Left ventricle myocardium superior (tissue), 1 donor: ENCODE measurements at regions of chr5 and their contacts with region 1.

Region 1: DNA sequence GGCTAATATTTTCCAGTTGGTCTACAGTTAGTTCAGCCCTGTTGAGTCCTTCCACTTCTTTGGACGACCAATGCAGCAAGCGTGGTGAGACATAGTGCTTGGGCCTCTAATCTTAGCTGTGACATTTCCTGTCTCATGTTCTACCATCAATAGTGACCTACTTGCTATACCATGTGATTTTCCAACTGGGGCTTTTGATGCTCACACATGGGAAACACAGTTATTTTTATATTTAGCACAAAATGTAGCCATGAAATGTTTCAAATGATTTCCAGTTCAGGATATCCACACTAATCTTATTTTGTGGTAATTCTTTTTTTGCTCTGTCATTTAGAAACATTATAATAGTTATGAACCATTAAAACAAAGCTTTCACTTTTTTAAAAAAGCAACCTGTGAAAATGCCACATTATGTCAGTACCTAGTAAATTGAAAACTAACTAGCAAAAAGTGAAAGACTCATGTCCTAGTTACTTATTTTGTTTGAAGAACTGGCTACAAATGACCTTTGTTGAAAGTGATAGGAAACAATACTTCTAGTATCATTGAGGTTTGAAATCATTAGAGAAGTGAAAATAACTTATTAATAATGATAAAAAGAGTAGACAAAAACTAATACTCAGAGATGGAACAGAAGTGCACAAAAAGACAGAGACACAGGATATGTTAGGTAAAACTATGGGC is 18.3 kb downstream of the MARCHF3 start:
- DNase-seq: no peak
- ATAC-seq: peak; percentile 47

Region 2: DNA sequence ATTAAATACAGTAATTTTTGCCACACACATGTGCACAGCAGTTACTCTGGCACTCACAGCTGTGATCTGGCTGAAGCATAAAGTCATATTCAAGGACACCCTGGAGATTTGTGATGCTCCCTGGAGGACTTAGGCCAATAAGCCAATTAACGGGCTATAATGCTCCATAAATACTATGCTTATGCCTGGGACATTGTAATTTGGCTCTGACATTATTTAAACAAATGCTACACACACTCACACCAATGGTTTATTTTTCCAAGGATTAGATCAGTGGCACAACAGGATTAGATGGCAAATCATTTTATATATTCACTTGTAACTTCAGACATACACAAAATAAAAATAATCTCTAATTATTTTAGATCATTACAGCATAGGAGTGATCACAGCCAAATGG is 123.9 kb before region 1 on chr5:
- intact Hi-C with region 1: no loop called
- DNase-seq: no peak
- ATAC-seq: no peak

Region 3: DNA sequence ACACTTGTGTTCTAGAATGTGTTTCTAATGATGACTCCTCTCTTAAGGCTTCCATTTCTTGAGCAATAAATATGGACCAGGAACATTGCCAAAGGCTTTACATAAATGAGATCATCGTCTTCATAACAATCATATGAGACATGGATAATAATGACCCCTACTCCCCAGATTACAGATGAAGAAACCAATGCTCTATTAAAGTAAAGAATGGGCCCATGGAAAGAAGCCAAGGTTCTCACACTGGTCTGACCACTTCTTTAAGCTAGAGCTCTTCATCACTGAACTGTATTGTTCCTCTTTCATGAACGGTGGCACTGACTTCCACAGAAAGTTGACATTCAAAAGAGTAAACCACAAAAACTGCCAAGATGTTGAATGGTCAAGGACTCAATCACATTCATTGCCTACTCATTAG is 47.0 kb before region 1 on chr5:
- intact Hi-C with region 1: loop called (anchors 10 kb)
- DNase-seq: no peak
- ATAC-seq: no peak

Region 4: DNA sequence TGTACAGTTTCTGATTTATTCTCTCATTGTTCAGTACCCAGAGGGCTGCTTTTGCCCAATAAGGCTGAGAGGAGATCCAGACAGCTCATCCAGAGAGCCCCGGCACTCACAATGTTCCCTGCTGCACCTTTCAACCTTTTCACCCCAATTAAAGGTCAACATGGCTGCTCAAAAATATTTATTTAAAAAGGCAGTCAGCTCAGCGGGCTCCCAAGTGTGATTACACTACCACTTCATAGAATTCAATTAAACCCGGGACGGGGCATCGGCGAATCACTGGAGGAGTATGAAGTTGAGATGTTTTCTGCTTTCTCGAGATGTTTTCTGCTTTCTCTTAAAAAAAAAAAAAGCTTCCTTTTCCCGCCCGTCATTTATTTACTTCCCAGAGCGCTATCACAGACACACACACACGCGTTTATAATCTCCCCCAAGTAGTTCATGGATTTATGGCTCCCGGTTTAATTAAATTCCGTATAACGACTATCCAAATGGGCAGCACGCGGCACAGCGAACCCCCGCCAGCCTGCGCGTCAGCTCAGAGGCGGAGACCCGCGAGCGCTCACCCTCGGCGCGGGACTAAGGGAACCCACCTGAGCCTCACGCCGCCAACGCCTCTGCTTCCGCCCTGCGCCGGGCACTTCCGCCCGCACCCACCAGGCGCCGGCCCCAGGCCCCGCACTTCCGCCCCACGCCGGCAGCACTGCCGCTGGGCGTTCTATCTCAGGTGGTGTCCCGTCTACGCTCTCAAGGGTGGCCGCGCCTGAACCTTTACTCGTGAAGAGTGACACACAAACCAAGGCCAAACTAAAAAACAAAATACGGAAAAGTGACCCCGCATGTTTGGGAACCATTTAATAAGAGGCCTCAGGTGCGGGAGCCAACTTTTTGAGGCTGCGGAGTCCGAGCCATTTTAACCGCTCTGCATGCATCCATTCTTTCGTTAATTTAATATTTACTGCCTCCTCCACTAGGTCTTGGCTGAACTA is 61.1 kb after region 1 on chr5 and contains the start of gene C5orf63:
- intact Hi-C with region 1: no loop called
- DNase-seq: peak; percentile 75
- ATAC-seq: peak; percentile 95
- total RNA-seq, gene C5orf63: 10.9 TPM

Region 5: GRCh38 chr5:127275745-127276144 is 263.6 kb after region 1 on chr5:
- intact Hi-C with region 1: no loop called
- DNase-seq: no peak
- ATAC-seq: no peak